ENCODE measurements at regions of chr3 and their contacts with region 1.

Region 1: DNA sequence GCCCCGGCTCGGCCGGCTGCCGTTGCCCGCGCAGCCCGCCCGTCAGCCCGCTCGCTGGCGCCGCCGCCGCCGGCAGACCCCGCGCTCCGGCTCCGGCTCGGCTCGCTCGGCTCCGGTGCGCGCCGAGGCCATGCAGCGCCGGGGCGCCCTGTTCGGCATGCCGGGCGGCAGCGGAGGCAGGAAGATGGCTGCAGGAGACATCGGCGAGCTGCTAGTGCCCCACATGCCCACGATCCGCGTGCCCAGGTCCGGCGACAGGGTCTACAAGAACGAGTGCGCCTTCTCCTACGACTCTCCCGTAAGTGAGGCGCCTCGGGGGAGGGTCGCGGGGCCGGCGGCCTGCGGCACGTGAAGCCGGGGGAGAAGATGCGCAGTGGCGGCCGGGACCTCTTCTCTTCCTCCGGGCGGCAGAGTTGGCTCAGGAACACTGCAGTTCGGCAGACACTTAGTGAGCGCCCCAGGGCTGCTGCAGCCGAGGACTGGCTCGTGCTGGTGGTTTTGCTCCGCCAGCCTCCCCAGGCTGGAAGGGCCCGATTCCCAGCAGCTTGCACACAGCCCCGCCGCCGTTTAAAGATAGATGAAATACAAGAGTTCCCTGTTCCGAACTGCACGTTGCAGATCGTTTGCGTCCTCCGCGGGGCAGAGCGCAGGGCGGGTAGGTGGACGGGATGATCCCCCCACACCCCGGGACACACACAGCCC is 407 bp downstream of the USP13 start:
- DNase-seq: peak; percentile 79 to 80
- H3K4me3 ChIP-seq: peak overlapping the region; percentile 97
- H3K27ac ChIP-seq: peak overlapping the region; percentile 57
- H3K4me1 ChIP-seq: peaks cover 9% of the 10 kb centered on the region
- H3K27me3 ChIP-seq: no peaks in the 10 kb centered on the region
- CTCF ChIP-seq: 0 out of 2 replicates have a peak, but pooled peaks have one; percentile 22

Region 2: DNA sequence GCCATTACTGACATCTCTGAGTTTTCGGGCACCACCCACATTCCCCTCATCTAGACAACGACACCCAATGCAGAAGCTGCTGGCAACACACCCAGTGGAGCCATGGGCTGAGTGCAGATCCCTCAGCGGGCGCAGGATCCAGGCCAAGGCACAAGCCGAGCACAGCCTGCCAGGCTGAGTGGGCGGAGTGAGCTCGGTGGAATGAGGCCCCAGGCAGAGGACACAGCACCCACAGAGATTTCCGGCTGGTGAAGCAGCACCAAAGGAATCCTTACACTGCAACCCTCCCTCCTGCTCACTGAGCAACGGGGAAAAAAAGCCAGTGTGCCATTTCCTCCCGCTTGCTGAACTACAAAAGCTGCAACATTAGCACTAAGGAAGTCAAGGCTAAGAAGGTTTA is 615.9 kb before region 1 on chr3:
- CTCF ChIA-PET with region 1: no interaction called
- POLR2A ChIA-PET with region 1: no interaction called
- intact Hi-C with region 1: no loop called
- DNase-seq: peak in 1 of 2 experiments; percentile 88
- H3K4me3 ChIP-seq: no peak overlapping the region
- H3K27ac ChIP-seq: no peak overlapping the region
- H3K4me1 ChIP-seq: no peaks in the 10 kb centered on the region
- H3K27me3 ChIP-seq: no peaks in the 10 kb centered on the region
- CTCF ChIP-seq: no peak

Region 3: GRCh38 chr3:179589143-179589542 is 64.1 kb before region 1 on chr3:
- CTCF ChIA-PET with region 1: no interaction called
- POLR2A ChIA-PET with region 1: no interaction called
- intact Hi-C with region 1: no loop called
- DNase-seq: no peak
- H3K4me3 ChIP-seq: no peak overlapping the region
- H3K27ac ChIP-seq: no peak overlapping the region
- H3K4me1 ChIP-seq: no peaks in the 10 kb centered on the region
- H3K27me3 ChIP-seq: no peaks in the 10 kb centered on the region
- CTCF ChIP-seq: no peak

Region 4: DNA sequence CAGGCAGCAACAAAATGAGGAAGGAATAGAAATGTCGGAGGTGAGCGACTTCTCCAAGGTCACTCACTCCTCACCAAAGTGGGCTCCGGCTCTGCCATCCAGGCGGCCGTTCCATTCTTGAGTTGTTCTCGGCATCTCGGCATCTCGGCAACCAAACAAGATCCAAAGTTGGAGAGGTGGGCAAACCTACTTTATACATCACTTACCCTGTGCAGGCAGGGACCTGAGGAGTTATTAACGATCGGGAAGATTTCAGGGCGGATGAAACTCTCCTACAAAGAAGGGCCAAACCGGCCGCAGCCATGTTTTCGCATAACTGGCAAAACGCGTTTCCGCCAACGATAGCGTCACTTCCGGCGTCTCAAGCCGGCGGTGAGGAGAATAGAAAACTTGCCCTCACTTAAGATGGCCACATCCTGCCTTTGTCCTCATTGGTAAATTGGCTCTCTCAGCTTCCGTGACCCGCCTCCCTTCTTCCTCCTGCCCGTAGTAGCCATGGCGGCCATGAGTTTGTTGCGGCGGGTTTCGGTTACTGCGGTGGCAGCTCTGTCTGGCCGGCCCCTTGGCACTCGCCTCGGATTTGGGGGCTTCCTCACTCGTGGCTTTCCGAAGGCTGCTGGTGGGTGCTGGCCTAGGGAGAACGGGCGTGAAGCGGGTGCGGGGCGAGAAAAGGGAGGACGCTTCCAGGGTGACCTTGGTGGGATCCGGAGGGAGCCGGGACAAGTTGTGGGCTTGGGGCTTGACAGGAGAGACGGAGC is 48.7 kb before region 1 on chr3 and contains the starts of genes MRPL47 and NDUFB5:
- CTCF ChIA-PET with region 1: no interaction called
- POLR2A ChIA-PET with region 1: no interaction called
- intact Hi-C with region 1: loop called (anchors 2 kb)
- DNase-seq: peak; percentile 90 to 95
- H3K4me3 ChIP-seq: peak within 1 kb of the TSS; percentile 94
- H3K27ac ChIP-seq: peak within 1 kb of the TSS; percentile 76
- H3K4me1 ChIP-seq: peaks cover 24% of the 10 kb centered on the region
- H3K27me3 ChIP-seq: no peaks in the 10 kb centered on the region
- CTCF ChIP-seq: no peak
- total RNA-seq, gene MRPL47: 51.3 and 56.1 TPM in 2 replicates
- total RNA-seq, gene NDUFB5: 121 and 128 TPM in 2 replicates

Region 5: GRCh38 chr3:179672908-179673307 is 19.7 kb after region 1 on chr3:
- CTCF ChIA-PET with region 1: no interaction called
- POLR2A ChIA-PET with region 1: no interaction called
- intact Hi-C with region 1: loop called (anchors 1 kb)
- DNase-seq: peak; percentile 77 to 89
- H3K4me3 ChIP-seq: peak overlapping the region; percentile 25; the same call in 1 of the 2 replicates
- H3K27ac ChIP-seq: peak overlapping the region; percentile 76
- H3K4me1 ChIP-seq: peaks cover 35% of the 10 kb centered on the region
- H3K27me3 ChIP-seq: no peaks in the 10 kb centered on the region
- CTCF ChIP-seq: no peak

Region 6: GRCh38 chr3:179688850-179689249 is 35.6 kb after region 1 on chr3:
- CTCF ChIA-PET with region 1: no interaction called
- POLR2A ChIA-PET with region 1: no interaction called
- intact Hi-C with region 1: no loop called
- DNase-seq: no peak
- H3K4me3 ChIP-seq: no peak overlapping the region
- H3K27ac ChIP-seq: no peak overlapping the region
- H3K4me1 ChIP-seq: no peaks in the 10 kb centered on the region
- H3K27me3 ChIP-seq: no peaks in the 10 kb centered on the region
- CTCF ChIP-seq: no peak

Region 7: GRCh38 chr3:179734497-179735281 is 81.4 kb after region 1 on chr3:
- CTCF ChIA-PET with region 1: no interaction called
- POLR2A ChIA-PET with region 1: interaction called, 14 read pairs
- intact Hi-C with region 1: no loop called
- DNase-seq: peak in 1 of 2 experiments; percentile 31
- H3K4me3 ChIP-seq: no peak overlapping the region
- H3K27ac ChIP-seq: no peak overlapping the region
- H3K4me1 ChIP-seq: peaks cover 31% of the 10 kb centered on the region
- H3K27me3 ChIP-seq: no peaks in the 10 kb centered on the region
- CTCF ChIP-seq: no peak

Region 8: GRCh38 chr3:179768080-179768479 is 114.8 kb after region 1 on chr3:
- CTCF ChIA-PET with region 1: no interaction called
- POLR2A ChIA-PET with region 1: no interaction called
- intact Hi-C with region 1: loop called (anchors 5 kb)
- DNase-seq: peak in 1 of 2 experiments; percentile 36
- H3K4me3 ChIP-seq: no peak overlapping the region
- H3K27ac ChIP-seq: no peak overlapping the region
- H3K4me1 ChIP-seq: no peaks in the 10 kb centered on the region
- H3K27me3 ChIP-seq: no peaks in the 10 kb centered on the region
- CTCF ChIP-seq: peak; percentile 66

Region 9: DNA sequence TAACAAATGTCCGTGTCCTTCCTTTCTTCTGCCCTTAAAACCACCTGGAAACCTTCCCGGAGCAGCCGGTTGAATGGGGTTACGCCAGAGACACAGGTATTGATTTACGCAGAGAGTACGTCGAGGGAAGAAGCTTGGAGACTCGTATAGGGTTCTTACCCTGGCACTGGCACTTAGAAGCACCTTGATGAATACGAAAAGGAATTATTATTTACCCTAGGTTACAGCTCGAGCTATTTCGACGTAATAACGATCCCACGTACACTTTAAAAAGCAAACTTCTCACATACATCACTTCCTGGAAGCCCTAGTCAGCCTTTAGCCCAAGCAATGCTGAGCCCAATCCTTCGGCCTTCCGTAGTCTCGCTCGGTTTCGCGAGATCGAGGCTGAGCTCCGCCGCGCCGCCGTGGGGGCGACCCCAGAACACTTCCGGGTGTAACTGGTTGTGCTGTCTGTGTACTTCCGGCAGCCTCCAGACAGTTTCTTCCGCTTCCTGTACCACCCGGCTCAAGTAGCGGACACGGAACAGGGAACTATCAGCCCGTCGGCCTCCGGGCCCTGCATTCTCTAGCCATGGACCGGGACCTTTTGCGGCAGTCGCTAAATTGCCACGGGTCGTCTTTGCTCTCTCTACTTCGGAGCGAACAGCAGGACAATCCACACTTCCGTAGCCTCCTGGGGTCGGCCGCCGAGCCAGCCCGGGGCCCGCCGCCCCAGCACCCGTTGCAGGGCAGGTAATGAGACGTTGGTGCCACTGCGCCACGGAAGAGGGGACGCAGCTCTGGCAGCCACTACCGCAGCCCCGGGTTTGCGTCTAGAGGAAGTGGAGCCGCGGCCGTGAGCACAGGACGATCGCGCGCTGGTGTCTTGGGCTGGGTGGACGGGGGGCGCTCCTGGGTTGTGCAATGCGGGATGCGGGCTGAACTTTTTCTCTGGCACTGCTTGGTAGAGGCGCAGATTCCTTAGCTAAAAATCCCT is 948.7 kb after region 1 on chr3 and contains the start of gene TTC14:
- CTCF ChIA-PET with region 1: interaction called, 3 read pairs
- POLR2A ChIA-PET with region 1: no interaction called
- intact Hi-C with region 1: loop called (anchors 1 kb)
- DNase-seq: peak; percentile 93 to 97
- H3K4me3 ChIP-seq: peak within 1 kb of the TSS; percentile 74
- H3K27ac ChIP-seq: peak within 1 kb of the TSS; percentile 77
- H3K4me1 ChIP-seq: peaks cover 18% of the 10 kb centered on the region
- H3K27me3 ChIP-seq: no peaks in the 10 kb centered on the region
- CTCF ChIP-seq: no peak
- total RNA-seq, gene TTC14: 51.1 and 55.4 TPM in 2 replicates

Region 10: GRCh38 chr3:180646187-180646790 is 993.0 kb after region 1 on chr3:
- CTCF ChIA-PET with region 1: no interaction called
- POLR2A ChIA-PET with region 1: interaction called, 11 read pairs
- intact Hi-C with region 1: no loop called
- DNase-seq: no peak
- H3K4me3 ChIP-seq: no peak overlapping the region
- H3K27ac ChIP-seq: no peak overlapping the region
- H3K4me1 ChIP-seq: no peaks in the 10 kb centered on the region
- H3K27me3 ChIP-seq: no peaks in the 10 kb centered on the region
- CTCF ChIP-seq: peak; percentile 56